ENCODE measurements at regions of chr10 and their contacts with region 1.

Region 1: DNA sequence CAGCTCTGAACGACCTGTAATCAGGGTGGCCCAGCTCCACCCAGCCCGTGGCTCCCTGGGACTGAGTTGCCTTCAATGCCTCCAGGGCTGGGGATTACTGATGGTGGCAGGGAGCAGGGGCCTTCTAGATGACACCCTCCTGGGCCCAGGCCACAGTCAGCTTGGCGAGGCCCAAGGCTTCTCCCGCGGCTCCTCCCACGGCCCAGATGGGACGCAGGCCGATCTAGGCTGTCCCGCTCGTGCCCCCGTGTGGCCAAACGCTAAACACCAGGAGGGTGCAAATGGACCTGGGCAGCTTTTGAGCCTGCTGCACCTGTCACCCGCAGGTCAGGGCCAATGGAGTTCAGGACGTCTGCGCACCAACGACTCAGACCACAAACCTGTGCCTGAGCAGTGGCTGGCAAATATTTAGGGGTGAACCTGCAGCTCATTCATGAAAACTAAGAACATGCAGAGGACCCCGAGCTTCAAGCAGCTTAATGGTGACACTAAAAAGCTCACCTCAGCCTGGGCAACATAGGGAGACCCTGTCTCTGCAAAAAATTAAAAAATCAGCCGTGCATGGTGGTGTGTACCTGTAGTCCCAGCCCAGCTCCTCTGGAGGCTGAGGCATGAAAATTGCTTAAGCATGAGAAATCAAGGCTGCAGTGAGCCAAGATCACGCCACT is 43.2 kb downstream of the ASB13 start:
- DNase-seq: peak; percentile 90
- H3K4me3 Mint-ChIP-seq: no peak overlapping the region
- H3K27ac Mint-ChIP-seq: no peak overlapping the region
- H3K4me1 Mint-ChIP-seq: peaks cover 2% of the 10 kb centered on the region
- H3K27me3 Mint-ChIP-seq: peaks cover 29% of the 10 kb centered on the region

Region 2: GRCh38 chr10:5334196-5334880 is 288.9 kb before region 1 on chr10:
- CTCF ChIA-PET with region 1: no interaction called
- DNase-seq: no peak
- H3K4me3 Mint-ChIP-seq: no peak overlapping the region
- H3K27ac Mint-ChIP-seq: no peak overlapping the region
- H3K4me1 Mint-ChIP-seq: peaks cover 15% of the 10 kb centered on the region
- H3K27me3 Mint-ChIP-seq: peaks cover 37% of the 10 kb centered on the region

Region 3: DNA sequence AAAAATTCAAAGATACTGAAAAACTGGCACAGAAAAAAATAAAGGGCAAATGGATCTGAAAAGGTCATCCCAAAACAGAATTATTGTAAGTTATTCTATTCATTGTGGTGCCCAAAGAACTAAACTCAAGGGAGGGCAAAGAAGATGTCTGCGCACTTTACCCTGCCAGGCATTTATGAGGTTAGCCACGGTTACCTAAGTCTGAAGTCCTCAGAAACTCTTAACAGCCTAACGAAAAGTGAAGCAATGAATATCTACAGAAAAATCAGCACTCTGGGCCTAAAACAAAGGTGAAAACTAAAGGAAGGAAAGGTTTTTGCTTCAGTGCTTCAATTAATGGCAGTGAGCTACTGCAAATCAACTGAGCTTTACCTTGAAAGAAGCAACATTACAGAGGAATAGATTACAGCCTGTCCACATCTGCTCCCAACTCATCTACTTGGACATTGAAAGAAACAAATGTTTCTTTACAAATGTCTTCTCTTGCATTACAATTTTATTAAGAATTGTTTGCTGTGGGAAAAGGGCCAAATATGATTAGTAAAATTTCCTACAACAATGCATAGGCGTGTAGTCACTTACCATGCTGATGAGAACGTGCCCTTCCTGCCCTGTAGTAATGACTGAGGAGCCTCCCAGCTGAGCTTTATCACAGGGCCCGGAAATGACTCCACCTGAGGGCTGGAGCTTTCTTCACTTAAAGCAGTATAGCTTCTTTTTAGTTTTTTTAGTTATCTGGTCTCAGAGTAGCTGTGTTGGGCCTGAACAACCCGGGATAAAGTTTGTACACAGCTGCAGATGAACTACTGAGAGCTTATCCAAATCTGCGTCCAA is 218.8 kb before region 1 on chr10 and contains the start of gene TUBAL3:
- CTCF ChIA-PET with region 1: no interaction called
- DNase-seq: no peak
- H3K4me3 Mint-ChIP-seq: no peak within 1 kb of the TSS
- H3K27ac Mint-ChIP-seq: no peak within 1 kb of the TSS
- H3K4me1 Mint-ChIP-seq: no peaks in the 10 kb centered on the region
- H3K27me3 Mint-ChIP-seq: peaks cover 14% of the 10 kb centered on the region

Region 4: DNA sequence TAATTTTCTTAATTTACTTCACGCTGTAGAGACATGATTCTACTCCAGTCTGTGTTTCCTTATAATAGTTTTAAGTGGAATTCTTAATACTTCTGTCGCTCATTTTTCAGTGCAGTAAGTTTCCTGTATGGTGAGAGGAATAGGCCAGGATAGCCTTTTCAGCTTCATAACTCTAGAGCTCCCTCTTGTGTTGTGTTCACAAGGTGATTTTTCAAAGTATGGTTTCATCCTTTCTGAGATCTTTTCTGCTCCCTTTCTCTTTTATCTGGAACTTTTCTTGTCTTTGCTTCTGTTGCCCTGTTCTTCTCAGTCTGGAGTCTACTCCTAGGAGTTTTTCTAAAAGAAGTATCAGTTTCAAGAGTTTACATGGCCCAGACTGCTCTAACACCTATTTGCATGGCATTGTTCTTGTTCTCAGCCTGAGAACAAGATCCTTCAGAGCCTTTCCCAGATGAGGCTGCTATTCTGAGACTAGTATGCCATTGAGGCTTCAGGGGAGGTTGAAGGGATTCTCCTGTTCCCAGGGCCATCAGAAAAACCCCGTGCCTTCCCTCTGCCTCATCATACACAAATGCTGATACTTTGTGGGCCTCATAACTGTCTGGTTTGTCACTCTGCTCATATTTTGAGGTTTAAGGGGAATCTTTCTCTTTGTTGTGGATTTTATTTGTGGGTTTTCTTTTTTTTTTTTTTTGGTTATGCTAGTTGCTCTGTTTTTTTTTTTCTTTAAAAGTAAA is 189.0 kb before region 1 on chr10:
- CTCF ChIA-PET with region 1: interaction called, 221 read pairs
- DNase-seq: no peak
- H3K4me3 Mint-ChIP-seq: no peak overlapping the region
- H3K27ac Mint-ChIP-seq: no peak overlapping the region
- H3K4me1 Mint-ChIP-seq: peaks cover 12% of the 10 kb centered on the region
- H3K27me3 Mint-ChIP-seq: no peaks in the 10 kb centered on the region

Region 5: DNA sequence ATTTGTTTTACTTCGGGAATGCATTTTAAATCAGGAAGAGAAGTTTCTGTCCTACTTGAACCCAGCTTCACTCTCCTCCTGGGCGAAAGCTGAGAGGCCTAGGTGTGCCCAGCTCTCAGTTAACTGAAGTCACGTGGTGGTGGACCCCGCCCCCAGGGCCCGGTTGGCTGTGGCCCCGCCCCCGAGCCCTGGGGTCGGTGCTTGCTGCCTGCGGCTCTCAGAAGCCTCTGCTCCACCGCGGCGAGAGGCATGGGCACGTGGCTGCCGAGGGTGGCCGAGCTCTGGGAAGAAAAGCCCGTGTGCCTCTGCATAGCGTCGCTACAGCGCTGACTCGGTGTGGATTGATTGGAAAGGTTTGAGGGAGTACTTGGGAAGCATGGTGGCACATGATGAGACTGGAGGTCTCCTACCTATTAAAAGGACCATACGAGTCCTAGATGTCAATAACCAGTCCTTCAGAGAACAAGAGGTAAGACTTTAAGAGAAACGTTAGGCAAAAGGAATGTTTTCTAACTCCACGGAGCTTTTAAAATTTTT is 176.8 kb before region 1 on chr10:
- CTCF ChIA-PET with region 1: interaction called, 221 read pairs
- DNase-seq: peak; percentile 92
- H3K4me3 Mint-ChIP-seq: peak overlapping the region; percentile 82
- H3K27ac Mint-ChIP-seq: peak overlapping the region; percentile 91
- H3K4me1 Mint-ChIP-seq: peaks cover 73% of the 10 kb centered on the region
- H3K27me3 Mint-ChIP-seq: no peaks in the 10 kb centered on the region

Region 6: DNA sequence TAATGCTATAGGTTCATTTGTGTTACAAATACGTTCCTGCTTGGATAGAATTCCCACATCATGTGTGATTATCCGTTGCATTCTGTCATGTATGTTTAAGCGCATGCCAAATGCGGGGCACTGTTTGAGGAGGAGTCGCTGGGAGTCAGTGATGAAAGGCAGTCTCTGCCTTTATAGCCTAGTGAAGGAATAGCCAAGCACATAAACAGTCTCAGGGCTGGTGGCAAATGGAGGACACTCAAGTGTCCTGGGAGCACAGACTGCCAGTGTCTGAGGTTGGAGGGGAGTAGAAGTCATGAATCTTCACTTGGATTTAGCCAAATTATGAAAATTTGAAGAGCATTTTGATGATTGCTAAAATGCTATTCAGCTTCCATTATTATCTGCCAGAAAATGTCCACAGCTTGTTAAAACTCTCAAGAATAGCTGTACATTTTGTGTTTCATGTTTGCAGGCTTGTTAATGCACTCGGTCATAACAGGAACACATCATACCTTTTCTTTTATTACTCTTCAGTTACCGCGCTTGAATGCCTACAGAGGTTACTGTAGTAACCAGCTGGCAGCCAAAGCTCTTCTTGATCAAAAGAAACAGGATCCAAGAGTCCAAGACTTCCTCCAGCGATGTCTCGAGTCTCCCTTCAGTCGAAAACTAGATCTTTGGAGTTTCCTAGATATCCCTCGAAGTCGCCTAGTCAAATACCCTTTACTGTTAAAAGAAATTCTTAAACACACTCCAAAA is 169.3 kb before region 1 on chr10:
- CTCF ChIA-PET with region 1: interaction called, 14 read pairs
- DNase-seq: no peak
- H3K4me3 Mint-ChIP-seq: no peak overlapping the region
- H3K27ac Mint-ChIP-seq: no peak overlapping the region
- H3K4me1 Mint-ChIP-seq: peaks cover 25% of the 10 kb centered on the region
- H3K27me3 Mint-ChIP-seq: no peaks in the 10 kb centered on the region

Region 7: GRCh38 chr10:5548527-5549223 is 74.5 kb before region 1 on chr10:
- CTCF ChIA-PET with region 1: interaction called, 17 read pairs
- DNase-seq: peak; percentile 70
- H3K4me3 Mint-ChIP-seq: no peak overlapping the region
- H3K27ac Mint-ChIP-seq: no peak overlapping the region
- H3K4me1 Mint-ChIP-seq: peaks cover 29% of the 10 kb centered on the region
- H3K27me3 Mint-ChIP-seq: peaks cover 27% of the 10 kb centered on the region

Region 8: DNA sequence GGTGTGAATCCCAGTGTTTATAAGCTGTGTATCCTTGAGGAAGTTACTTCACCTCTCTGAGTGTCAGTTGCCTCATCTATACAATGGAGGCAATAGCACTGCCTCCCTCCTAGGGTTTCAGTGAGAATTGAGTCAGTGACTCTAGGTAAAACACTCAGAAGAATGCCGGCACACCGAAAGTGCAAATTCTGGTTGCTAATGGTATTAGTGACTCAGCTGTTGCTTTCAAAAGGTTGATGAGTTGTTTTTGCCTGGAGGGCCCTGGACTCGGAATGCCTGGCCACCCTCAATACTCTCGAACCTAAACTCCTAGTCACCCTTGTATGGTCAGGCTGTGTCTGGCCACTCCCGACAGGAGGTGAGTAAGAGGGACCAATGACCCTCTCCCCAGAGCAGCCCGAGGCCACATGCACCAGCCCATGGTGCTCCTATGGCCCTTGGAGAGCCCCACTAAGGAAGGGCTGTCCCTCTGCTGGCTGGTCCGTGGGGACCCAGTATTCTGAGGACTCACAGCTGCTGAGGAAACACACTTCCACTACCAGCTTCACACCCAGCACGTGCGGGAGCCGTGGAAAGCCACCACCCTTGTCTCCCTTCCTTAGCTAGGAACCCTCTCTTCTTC is 38.2 kb before region 1 on chr10:
- CTCF ChIA-PET with region 1: interaction called, 13 read pairs
- DNase-seq: no peak
- H3K4me3 Mint-ChIP-seq: no peak overlapping the region
- H3K27ac Mint-ChIP-seq: no peak overlapping the region
- H3K4me1 Mint-ChIP-seq: no peaks in the 10 kb centered on the region
- H3K27me3 Mint-ChIP-seq: peaks cover 39% of the 10 kb centered on the region

Region 9: DNA sequence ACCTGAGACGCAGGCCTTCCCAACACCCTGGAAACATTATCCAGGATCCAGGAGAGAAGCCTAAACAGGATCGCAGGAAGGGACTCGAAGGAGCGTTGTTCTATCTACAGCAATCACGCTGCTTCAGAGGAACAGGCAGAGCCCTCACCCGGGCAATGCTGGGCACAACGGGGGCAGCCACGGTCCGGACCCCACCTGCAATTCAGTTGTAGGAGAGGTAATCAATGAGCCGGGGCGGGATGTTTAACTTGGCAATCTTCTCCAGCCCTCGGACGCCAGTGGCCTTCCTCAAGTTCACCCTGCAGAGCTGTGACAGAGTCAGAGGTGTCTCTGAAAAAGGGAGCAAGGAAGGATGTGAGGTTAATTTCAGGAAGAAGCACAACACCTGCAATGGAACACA is 17.3 kb after region 1 on chr10:
- CTCF ChIA-PET with region 1: no interaction called
- DNase-seq: no peak
- H3K4me3 Mint-ChIP-seq: no peak overlapping the region
- H3K27ac Mint-ChIP-seq: no peak overlapping the region
- H3K4me1 Mint-ChIP-seq: no peaks in the 10 kb centered on the region
- H3K27me3 Mint-ChIP-seq: no peaks in the 10 kb centered on the region

Measured in activated naive CD4-positive, alpha-beta T cell treated with anti-CD3 and anti-CD28 coated beads, Interleukin-2, amount 10 ng/mL, durations not matched to agents 7 days and 5 days (primary cell).